K562 (cell line): ENCODE measurements at regions of chr11 and their contacts with region 1.

Region 1: DNA sequence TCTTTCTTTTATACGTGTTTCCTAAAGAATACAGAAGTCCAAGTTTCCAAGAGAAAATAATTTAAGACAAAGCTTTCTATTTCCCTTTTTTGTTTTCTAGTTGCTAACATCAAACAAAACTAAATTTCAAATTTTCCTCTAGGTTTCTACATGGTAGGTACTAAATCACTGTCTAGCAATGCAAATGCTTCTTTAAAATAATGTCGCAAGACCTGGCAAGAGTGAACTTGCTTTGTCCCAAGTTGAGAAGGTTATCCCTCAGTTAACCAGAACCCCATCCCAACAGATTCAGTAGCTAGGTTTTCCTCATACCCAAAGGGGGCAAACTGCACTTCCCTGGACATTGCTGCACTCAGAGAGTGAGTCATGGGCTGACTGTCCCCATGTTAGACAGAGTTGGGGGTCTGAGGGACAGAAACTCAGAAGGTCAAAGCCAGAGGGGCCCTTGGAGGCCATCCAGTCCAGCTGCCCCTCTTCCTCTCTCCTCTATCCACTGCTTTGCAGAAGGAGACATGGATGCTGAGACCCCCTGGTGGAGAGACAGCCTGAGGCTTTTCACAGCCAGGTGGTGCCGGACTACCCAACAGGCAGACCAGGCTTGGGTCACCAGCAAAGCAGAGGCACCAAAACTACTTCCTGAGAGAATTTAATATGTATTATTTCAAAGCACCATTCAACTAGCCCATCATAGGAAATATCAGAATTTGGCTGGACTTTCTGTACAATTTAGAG is 23.1 kb downstream of the OR2AT4 start:
- DNase-seq: peak in 3 of 4 experiments; percentile 30 to 47 (median 42)
- ATAC-seq: peak; percentile 80
- H3K4me3 ChIP-seq: no peak overlapping the region
- H3K27ac ChIP-seq: no peak overlapping the region
- H3K4me1 ChIP-seq: peaks cover 0 to 20% of the 10 kb centered on the region in 2 experiments; a peak in 3 of 5 replicates
- H3K27me3 ChIP-seq: no peaks in the 10 kb centered on the region
- CTCF ChIP-seq: peak; percentile 52 to 94 (median 59); a peak in 5 of 6 replicates
- EP300 ChIP-seq: no peak
- POLR2A ChIP-seq: no peak
- RAD21 ChIP-seq: peak in 1 of 2 experiments; percentile 46; a peak in 2 of 4 replicates

Region 2: GRCh38 chr11:75105462-75105925 is 31.9 kb after region 1 on chr11:
- CTCF ChIA-PET with region 1: no interaction called
- POLR2A ChIA-PET with region 1: interaction called, 4 read pairs
- in situ Hi-C with region 1: no loop called
- intact Hi-C with region 1: loop called (anchors 5 kb)
- DNase-seq: peak; percentile 69 to 94 (median 79)
- ATAC-seq: peak; percentile 86
- H3K4me3 ChIP-seq: peak overlapping the region; percentile 1; the same call in 1 of the 2 replicates
- H3K27ac ChIP-seq: peak overlapping the region; percentile 69
- H3K4me1 ChIP-seq: peaks cover 17 to 25% of the 10 kb centered on the region in 2 experiments; a peak in 4 of 5 replicates
- H3K27me3 ChIP-seq: no peaks in the 10 kb centered on the region
- CTCF ChIP-seq: no peak
- EP300 ChIP-seq: peak; percentile 74
- POLR2A ChIP-seq: 0 out of 2 replicates have a peak, but pooled peaks have one; percentile 47
- RAD21 ChIP-seq: no peak; a peak in 1 of 4 replicates

Region 3: DNA sequence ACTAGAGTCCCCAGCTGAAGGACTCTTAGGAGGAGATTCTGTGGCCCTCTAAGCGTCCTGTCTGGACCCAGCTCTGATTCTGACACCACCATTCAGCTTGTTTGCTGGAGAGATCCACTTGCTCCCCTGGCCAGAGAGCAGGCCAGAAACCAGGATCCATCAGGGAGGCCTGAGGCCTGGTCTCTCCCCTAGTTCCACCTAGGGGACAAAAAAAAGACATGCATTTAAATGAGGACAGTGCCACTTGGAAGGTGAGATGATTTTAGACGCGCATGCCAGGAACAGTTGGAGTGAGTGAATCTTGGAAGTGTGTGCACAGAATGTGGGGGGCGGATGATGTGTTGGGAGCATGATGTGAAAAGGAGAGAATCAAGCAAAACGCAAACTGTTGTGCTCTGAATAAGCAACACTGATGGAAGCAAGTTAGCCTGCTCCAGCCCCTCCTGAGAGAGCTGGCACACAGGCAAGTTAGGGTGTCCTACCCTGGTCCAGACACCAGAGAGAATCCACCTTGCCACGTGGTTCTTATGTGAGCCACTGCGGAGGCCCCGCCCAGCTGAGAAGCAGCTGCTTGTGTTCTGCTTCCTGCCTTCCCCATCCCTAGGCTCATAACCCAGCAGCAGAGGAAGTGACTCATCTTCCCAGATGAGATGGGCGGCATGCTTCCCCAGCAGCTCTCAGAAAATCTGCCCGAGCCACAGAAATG is 69.2 kb after region 1 on chr11:
- CTCF ChIA-PET with region 1: no interaction called
- POLR2A ChIA-PET with region 1: no interaction called
- in situ Hi-C with region 1: no loop called
- intact Hi-C with region 1: no loop called
- DNase-seq: peak; percentile 84 to 91 (median 88)
- ATAC-seq: peak; percentile 86
- H3K4me3 ChIP-seq: no peak overlapping the region
- H3K27ac ChIP-seq: peak overlapping the region; percentile 33; the same call in 1 of the 3 replicates
- H3K4me1 ChIP-seq: peaks cover 22 to 32% of the 10 kb centered on the region in 2 experiments
- H3K27me3 ChIP-seq: no peaks in the 10 kb centered on the region
- CTCF ChIP-seq: 0 out of 6 replicates have a peak, but pooled peaks of 1 of the 3 experiments have one; percentile 2
- EP300 ChIP-seq: 0 out of 2 replicates have a peak, but pooled peaks have one; percentile 23
- POLR2A ChIP-seq: no peak
- RAD21 ChIP-seq: no peak